Ascending aorta (tissue), 2 donors: ENCODE measurements at regions of chr1 and their contacts with region 1.

Region 1: GRCh38 chr1:108559215-108560186 is at the start of gene EEIG2:
- DNase-seq: peak; percentile 24 to 93
- H3K4me3 ChIP-seq: peak within 1 kb of the TSS; percentile 72 to 87
- H3K27ac ChIP-seq: peak within 1 kb of the TSS; percentile 72 to 75
- H3K4me1 ChIP-seq: peaks cover 9 to 19% of the 10 kb centered on the region in 2 donors
- H3K27me3 ChIP-seq: no peaks in the 10 kb centered on the region
- CTCF ChIP-seq: peak; percentile 47 to 83 (median 67)
- total RNA-seq, gene EEIG2: 9.6 TPM

Region 2: DNA sequence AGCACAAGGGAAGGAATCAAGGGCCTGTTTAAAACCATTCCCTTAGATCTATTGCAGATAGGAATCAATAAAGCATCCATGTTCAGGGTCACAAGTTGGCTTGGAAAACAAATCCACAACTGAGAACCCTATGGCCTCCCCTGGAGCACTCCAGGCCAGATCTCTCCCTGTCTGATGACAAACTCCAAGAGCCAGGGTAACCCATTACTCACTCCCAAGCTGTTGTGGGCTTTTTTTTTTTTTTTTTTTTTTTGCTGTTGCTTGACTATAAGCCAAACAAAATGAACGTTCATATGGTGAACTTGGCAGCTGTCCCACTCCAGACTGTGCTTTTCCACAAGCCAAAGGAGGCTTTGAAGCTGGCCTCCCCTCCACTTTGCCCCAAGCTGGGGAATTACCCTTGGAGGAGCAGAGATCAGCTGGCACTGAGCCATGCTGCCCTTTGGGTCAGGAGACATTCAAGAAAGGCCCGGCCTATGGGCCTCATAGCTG is 558.8 kb before region 1 on chr1:
- intact Hi-C with region 1: no loop called
- DNase-seq: no peak
- H3K4me3 ChIP-seq: no peak overlapping the region
- H3K27ac ChIP-seq: no peak overlapping the region
- H3K4me1 ChIP-seq: no peaks in the 10 kb centered on the region
- H3K27me3 ChIP-seq: no peaks in the 10 kb centered on the region
- CTCF ChIP-seq: no peak

Region 3: GRCh38 chr1:108512239-108512981 is 47.1 kb before region 1 on chr1:
- intact Hi-C with region 1: loop called (anchors 2 kb)
- DNase-seq: no peak
- H3K4me3 ChIP-seq: no peak overlapping the region
- H3K27ac ChIP-seq: no peak overlapping the region
- H3K4me1 ChIP-seq: no peaks in the 10 kb centered on the region
- H3K27me3 ChIP-seq: no peaks in the 10 kb centered on the region
- CTCF ChIP-seq: peak; percentile 68 to 87 (median 81)

Region 4: GRCh38 chr1:108590957-108591356 is 31.5 kb after region 1 on chr1:
- intact Hi-C with region 1: loop called (anchors 1 kb)
- DNase-seq: no peak
- H3K4me3 ChIP-seq: no peak overlapping the region
- H3K27ac ChIP-seq: peak overlapping the region; percentile 72 to 87
- H3K4me1 ChIP-seq: peaks cover 3 to 35% of the 10 kb centered on the region in 2 donors
- H3K27me3 ChIP-seq: no peaks in the 10 kb centered on the region
- CTCF ChIP-seq: no peak

Region 5: DNA sequence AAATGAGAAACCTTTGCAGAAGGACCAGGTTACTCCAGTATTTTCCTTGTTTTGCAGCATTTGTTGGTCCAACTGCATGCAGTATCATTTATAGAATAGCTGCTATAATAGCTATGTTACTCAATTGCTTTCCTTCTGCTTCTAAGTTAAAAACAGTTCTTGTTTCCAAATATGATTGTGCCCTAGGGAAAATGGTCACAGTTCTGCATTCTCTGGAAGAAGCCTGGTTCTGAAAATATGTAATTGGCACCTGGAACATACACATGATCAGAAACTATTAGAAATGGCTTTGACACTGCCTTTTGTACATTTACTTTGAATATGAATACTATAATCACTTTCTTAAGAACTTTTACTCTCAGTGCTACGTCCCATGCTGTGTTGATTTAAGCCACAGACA is 67.8 kb after region 1 on chr1:
- intact Hi-C with region 1: loop called (anchors 5 kb)
- DNase-seq: no peak
- H3K4me3 ChIP-seq: no peak overlapping the region
- H3K27ac ChIP-seq: peak overlapping the region in 1 of 2 donors; percentile 8
- H3K4me1 ChIP-seq: peaks cover 0 to 2% of the 10 kb centered on the region in 2 donors
- H3K27me3 ChIP-seq: no peaks in the 10 kb centered on the region
- CTCF ChIP-seq: no peak

Region 6: GRCh38 chr1:108643492-108644335 is 84.2 kb after region 1 on chr1:
- intact Hi-C with region 1: loop called (anchors 2 kb)
- DNase-seq: no peak
- H3K4me3 ChIP-seq: no peak overlapping the region
- H3K27ac ChIP-seq: no peak overlapping the region
- H3K4me1 ChIP-seq: peaks cover 0 to 6% of the 10 kb centered on the region in 2 donors
- H3K27me3 ChIP-seq: no peaks in the 10 kb centered on the region
- CTCF ChIP-seq: peak; percentile 59 to 74 (median 66)

Region 7: GRCh38 chr1:108691942-108692723 is 132.6 kb after region 1 on chr1 and contains the start of gene PRPF38B:
- intact Hi-C with region 1: loop called (anchors 2 kb)
- DNase-seq: peak; percentile 80 to 97
- H3K4me3 ChIP-seq: peak within 1 kb of the TSS; percentile 82 to 98
- H3K27ac ChIP-seq: peak within 1 kb of the TSS; percentile 92 to 99
- H3K4me1 ChIP-seq: peaks cover 0 to 16% of the 10 kb centered on the region in 2 donors
- H3K27me3 ChIP-seq: no peaks in the 10 kb centered on the region
- CTCF ChIP-seq: no peak
- total RNA-seq, gene PRPF38B: 9.0 TPM